Spleen (tissue), 13 donors: ENCODE measurements at regions of chr10 and their contacts with region 1.

Region 1: DNA sequence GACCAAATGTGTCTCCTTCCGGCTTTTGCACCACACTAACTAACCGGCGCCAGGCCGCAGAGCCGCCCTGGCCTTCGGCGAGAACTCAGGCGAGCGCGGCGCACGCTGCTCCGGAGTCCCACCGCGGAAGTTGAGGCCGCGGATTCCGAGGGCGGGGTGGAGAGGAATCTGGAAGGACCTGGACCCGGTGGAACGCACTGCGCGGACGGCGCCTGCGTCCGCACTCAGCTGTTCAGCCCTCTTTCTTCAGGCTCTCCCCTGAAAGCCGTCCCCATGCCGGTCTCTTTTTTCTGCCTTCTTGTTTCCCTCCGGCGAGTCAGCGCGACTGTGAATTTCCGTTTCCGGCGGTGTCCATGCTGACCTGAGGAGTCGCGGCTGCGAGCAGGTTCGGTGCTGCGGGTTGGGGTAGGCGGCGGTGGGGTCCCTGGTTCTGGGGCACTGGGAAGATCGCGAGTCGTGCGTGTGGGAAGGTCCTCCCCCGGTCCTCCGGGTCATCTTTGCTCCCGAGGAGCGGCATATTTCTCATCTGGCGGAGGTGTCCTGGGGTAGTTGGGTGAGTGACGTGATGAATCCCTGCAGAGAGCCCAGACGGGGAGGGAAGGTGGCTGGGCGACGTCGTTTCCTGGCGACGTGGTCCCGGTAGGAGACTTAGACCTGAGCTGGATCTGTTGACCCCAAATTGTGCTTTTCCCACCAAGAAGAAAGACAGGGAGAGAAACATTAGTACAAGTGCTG is at the start of gene BMS1:
- DNase-seq: peak; percentile 96
- H3K4me3 ChIP-seq: peak within 1 kb of the TSS; percentile 60 to 98 (median 86)
- H3K27ac ChIP-seq: peak within 1 kb of the TSS; percentile 88 to 96 (median 93)
- H3K4me1 ChIP-seq: peaks cover 12 to 43% (median 20%) of the 10 kb centered on the region in 6 donors
- H3K27me3 ChIP-seq: no peaks in the 10 kb centered on the region
- CTCF ChIP-seq: no peak
- POLR2A ChIP-seq: peak in 1 of 3 donors; percentile 39
- total RNA-seq, gene BMS1: 13.1 to 17.7 (median 15.5) TPM

Region 2: GRCh38 chr10:42552493-42553407 is 229.9 kb before region 1 on chr10:
- intact Hi-C with region 1: loop called (anchors 5 kb)
- DNase-seq: peak; percentile 98
- H3K4me3 ChIP-seq: peak overlapping the region; percentile 63 to 88 (median 76)
- H3K27ac ChIP-seq: peak overlapping the region; percentile 58 to 89 (median 84)
- H3K4me1 ChIP-seq: peaks cover 13 to 34% (median 25%) of the 10 kb centered on the region in 6 donors
- H3K27me3 ChIP-seq: no peaks in the 10 kb centered on the region
- CTCF ChIP-seq: no peak
- POLR2A ChIP-seq: peak in 2 of 3 donors; percentile 19 to 33

Region 3: GRCh38 chr10:42638055-42638820 is 144.4 kb before region 1 on chr10 and contains the start of gene ZNF33B:
- intact Hi-C with region 1: loop called (anchors 10 kb)
- DNase-seq: peak; percentile 99
- H3K4me3 ChIP-seq: peak within 1 kb of the TSS; percentile 80 to 97 (median 86)
- H3K27ac ChIP-seq: peak within 1 kb of the TSS; percentile 84 to 97 (median 96)
- H3K4me1 ChIP-seq: peaks cover 10 to 50% (median 20%) of the 10 kb centered on the region in 6 donors
- H3K27me3 ChIP-seq: no peaks in the 10 kb centered on the region
- CTCF ChIP-seq: no peak
- POLR2A ChIP-seq: peak in 2 of 3 donors; percentile 3 to 39
- total RNA-seq, gene ZNF33B: 16.7 to 34.1 (median 26.1) TPM

Region 4: GRCh38 chr10:42722575-42722974 is 60.0 kb before region 1 on chr10:
- intact Hi-C with region 1: no loop called
- DNase-seq: no peak
- H3K4me3 ChIP-seq: no peak overlapping the region
- H3K27ac ChIP-seq: no peak overlapping the region
- H3K4me1 ChIP-seq: no peaks in the 10 kb centered on the region
- H3K27me3 ChIP-seq: peaks cover 0 to 9% (median 0%) of the 10 kb centered on the region in 7 donors
- CTCF ChIP-seq: no peak
- POLR2A ChIP-seq: no peak